Heart left ventricle (tissue), 16 donors: ENCODE measurements at regions of chr4 and their contacts with region 1.

Region 1: DNA sequence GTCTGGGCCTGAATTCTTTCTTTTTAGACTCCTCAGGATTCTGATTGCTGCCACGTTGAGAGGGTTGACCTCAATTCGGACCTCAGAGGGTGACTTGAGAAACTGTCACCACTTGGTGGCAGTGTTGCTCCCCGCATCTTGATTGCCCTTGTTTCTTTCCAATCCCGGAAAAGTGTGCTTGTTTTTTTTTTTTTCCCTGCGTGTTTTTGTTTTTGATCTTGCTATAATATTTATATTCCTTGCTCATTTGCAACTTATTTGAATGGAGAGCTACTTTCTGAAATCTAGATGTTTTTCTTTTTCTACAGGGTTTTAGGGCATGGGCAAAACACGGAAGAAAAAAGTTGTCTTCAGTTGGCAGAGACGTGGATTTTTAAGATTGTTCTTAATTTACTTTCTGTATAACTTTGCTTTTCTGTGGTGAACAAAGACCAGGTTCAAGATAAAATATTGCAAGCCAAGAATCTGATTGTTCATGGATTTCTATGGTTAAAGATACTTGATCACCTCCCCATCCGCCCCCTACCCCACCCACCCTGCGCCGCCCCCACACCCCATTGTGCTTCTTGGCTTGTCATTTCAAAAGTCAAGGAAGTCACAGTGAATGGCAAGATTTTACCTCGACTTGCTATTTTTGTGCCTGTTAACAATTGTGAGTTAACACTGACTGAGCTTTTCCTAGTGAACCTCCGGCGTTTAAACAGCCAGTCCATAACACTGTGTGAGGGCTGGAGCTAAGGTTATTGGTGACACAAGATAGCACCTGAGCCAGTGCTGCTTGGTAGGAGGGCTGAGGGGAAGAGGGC is 102.1 kb downstream of the PTTG2 start:
- DNase-seq: peak; percentile 67 to 85 (median 78)
- ATAC-seq: peak; percentile 46 to 80 (median 66)
- H3K4me3 ChIP-seq: peak overlapping the region in 9 of 12 donors; percentile 31 to 55 (median 39)
- H3K27ac ChIP-seq: peak overlapping the region in 11 of 12 donors; percentile 59 to 83 (median 73)
- H3K4me1 ChIP-seq: peaks cover 0 to 33% (median 17%) of the 10 kb centered on the region in 12 donors
- H3K27me3 ChIP-seq: no peaks in the 10 kb centered on the region
- CTCF ChIP-seq: peak; percentile 81 to 95 (median 88)
- POLR2A ChIP-seq: no peak

Region 2: GRCh38 chr4:37365888-37366287 is 696.4 kb before region 1 on chr4:
- intact Hi-C with region 1: no loop called
- DNase-seq: no peak
- ATAC-seq: no peak
- H3K4me3 ChIP-seq: no peak overlapping the region
- H3K27ac ChIP-seq: no peak overlapping the region
- H3K4me1 ChIP-seq: no peaks in the 10 kb centered on the region
- H3K27me3 ChIP-seq: no peaks in the 10 kb centered on the region
- CTCF ChIP-seq: no peak
- POLR2A ChIP-seq: no peak

Region 3: GRCh38 chr4:37686373-37687193 is 375.7 kb before region 1 on chr4 and contains the start of gene RELL1:
- intact Hi-C with region 1: no loop called
- DNase-seq: peak; percentile 99 to 100 (median 100)
- ATAC-seq: peak; percentile 97 to 98 (median 98)
- H3K4me3 ChIP-seq: peak within 1 kb of the TSS; percentile 65 to 99 (median 92)
- H3K27ac ChIP-seq: peak within 1 kb of the TSS; percentile 75 to 98 (median 96)
- H3K4me1 ChIP-seq: peaks cover 0 to 46% (median 24%) of the 10 kb centered on the region in 12 donors
- H3K27me3 ChIP-seq: no peaks in the 10 kb centered on the region
- CTCF ChIP-seq: no peak
- POLR2A ChIP-seq: peak in 1 of 2 donors; percentile 12
- total RNA-seq, gene RELL1: 17.1 to 40.2 (median 28.5) TPM

Region 4: DNA sequence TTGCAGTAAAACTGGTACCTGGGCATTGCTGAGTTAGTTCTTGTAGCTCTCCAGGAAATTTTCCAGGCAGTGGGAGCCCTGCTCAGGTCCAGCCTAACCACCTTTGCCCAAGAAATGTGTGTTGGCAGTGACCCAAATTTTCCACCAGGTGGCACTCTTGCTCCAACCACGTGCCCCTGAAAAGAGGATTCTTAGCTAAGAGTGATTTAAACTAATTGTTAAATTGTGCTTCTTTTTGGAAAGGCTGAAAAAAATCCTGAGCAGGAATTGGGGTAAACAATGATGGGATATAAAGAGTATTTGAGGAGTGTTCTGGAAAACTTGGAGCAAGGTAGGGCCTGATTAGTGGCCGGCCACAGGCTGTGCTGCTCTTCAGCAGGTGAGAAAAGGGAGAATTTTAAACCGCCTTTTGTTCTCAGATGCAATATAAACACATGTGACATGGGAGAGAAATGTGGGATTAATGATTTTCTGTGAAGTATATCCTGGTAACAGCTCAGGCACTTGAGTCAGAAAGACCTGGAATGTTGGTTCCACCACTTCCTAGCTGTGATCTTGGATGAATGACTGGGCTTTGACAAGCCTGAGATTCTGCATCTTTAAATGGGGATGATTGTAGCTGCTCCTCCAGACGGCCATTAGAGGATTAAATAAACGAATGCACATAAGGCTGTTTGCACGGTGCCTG is 117.5 kb after region 1 on chr4:
- intact Hi-C with region 1: loop called in 9 of 10 experiments (anchors 1 to 5 kb)
- DNase-seq: peak; percentile 54 to 78 (median 68)
- ATAC-seq: peak in 3 of 4 donors; percentile 31 to 68 (median 68)
- H3K4me3 ChIP-seq: no peak overlapping the region
- H3K27ac ChIP-seq: no peak overlapping the region
- H3K4me1 ChIP-seq: peaks cover 0 to 60% (median 19%) of the 10 kb centered on the region in 12 donors
- H3K27me3 ChIP-seq: no peaks in the 10 kb centered on the region
- CTCF ChIP-seq: peak; percentile 89 to 96 (median 92)
- POLR2A ChIP-seq: no peak

Region 5: GRCh38 chr4:38266616-38267015 is 204.3 kb after region 1 on chr4:
- intact Hi-C with region 1: no loop called
- DNase-seq: peak in 1 of 5 donors; percentile 34
- ATAC-seq: peak in 3 of 4 donors; percentile 54 to 80 (median 74)
- H3K4me3 ChIP-seq: no peak overlapping the region
- H3K27ac ChIP-seq: no peak overlapping the region
- H3K4me1 ChIP-seq: no peaks in the 10 kb centered on the region
- H3K27me3 ChIP-seq: no peaks in the 10 kb centered on the region
- CTCF ChIP-seq: no peak
- POLR2A ChIP-seq: no peak

Region 6: GRCh38 chr4:38675146-38676121 is 613.1 kb after region 1 on chr4:
- intact Hi-C with region 1: loop called (anchors 2 to 10 kb)
- DNase-seq: peak in 4 of 5 donors; percentile 68 to 78 (median 76)
- ATAC-seq: peak in 3 of 4 donors; percentile 40 to 45 (median 42)
- H3K4me3 ChIP-seq: peak overlapping the region in 4 of 12 donors; percentile 2 to 42 (median 18)
- H3K27ac ChIP-seq: peak overlapping the region in 10 of 12 donors; percentile 97 to 100 (median 99)
- H3K4me1 ChIP-seq: peaks cover 30 to 91% (median 81%) of the 10 kb centered on the region in 12 donors
- H3K27me3 ChIP-seq: no peaks in the 10 kb centered on the region
- CTCF ChIP-seq: peak; percentile 84 to 97 (median 92)
- POLR2A ChIP-seq: no peak

Region 7: GRCh38 chr4:38782452-38783108 is 720.3 kb after region 1 on chr4 and contains the start of gene TLR10:
- intact Hi-C with region 1: loop called in 2 of 10 experiments (anchors 5 kb)
- DNase-seq: peak in 2 of 5 donors; percentile 33 to 40
- ATAC-seq: peak in 3 of 4 donors; percentile 59 to 78 (median 71)
- H3K4me3 ChIP-seq: no peak within 1 kb of the TSS
- H3K27ac ChIP-seq: no peak within 1 kb of the TSS
- H3K4me1 ChIP-seq: peaks cover 0 to 16% (median 0%) of the 10 kb centered on the region in 12 donors
- H3K27me3 ChIP-seq: no peaks in the 10 kb centered on the region
- CTCF ChIP-seq: peak; percentile 65 to 83 (median 72)
- POLR2A ChIP-seq: no peak
- total RNA-seq, gene TLR10: 0.18 to 0.24 TPM in 2 of 9 donors, not detected in the others